ENCODE measurements at regions of chr15 and their contacts with region 1.

Region 1: GRCh38 chr15:69760890-69761568 is 308.4 kb downstream of the RPLP1 start:
- DNase-seq: peak; percentile 41
- ATAC-seq: peak; percentile 71
- H3K4me3 Mint-ChIP-seq: peak overlapping the region; percentile 11
- H3K27ac Mint-ChIP-seq: peak overlapping the region; percentile 57
- H3K4me1 Mint-ChIP-seq: peaks cover 74% of the 10 kb centered on the region
- H3K27me3 Mint-ChIP-seq: no peaks in the 10 kb centered on the region
- CTCF ChIP-seq: no peak

Region 2: DNA sequence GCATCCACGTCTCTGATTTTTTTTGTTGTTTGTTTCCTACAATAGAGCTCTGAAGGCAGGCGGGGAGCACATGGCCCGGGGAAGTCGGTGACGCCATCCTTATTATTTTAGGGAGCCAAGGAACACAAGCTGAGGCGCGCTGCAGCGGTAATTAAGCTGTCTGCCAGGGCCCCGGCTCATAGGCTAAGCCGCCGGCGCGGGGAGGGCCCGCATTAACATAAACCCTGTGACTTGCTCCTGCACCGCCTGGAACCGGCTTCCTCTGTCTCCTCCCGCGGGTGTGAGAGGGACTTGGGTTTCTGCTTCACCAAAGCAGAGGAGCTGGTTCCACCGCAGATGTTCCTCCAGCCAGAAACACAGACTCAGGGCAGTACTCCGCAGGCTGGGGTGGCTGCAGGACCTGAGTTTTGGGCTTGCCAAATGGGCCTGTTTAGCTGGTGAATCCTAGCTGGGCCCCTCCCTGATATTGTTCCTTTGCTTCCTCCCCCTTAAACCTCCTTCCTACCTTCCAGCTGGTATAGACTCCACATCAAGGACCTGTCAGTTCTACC is 965.7 kb before region 1 on chr15:
- CTCF ChIA-PET with region 1: no interaction called
- POLR2A ChIA-PET with region 1: no interaction called
- intact Hi-C with region 1: loop called (anchors 5 kb)
- DNase-seq: peak; percentile 55
- ATAC-seq: peak; percentile 62
- H3K4me3 Mint-ChIP-seq: peak overlapping the region; percentile 75
- H3K27ac Mint-ChIP-seq: peak overlapping the region; percentile 85
- H3K4me1 Mint-ChIP-seq: peaks cover 97% of the 10 kb centered on the region
- H3K27me3 Mint-ChIP-seq: no peaks in the 10 kb centered on the region
- CTCF ChIP-seq: no peak

Region 3: GRCh38 chr15:68924866-68925560 is 836.0 kb before region 1 on chr15:
- CTCF ChIA-PET with region 1: no interaction called
- POLR2A ChIA-PET with region 1: no interaction called
- intact Hi-C with region 1: no loop called
- DNase-seq: peak; percentile 32
- ATAC-seq: peak; percentile 69
- H3K4me3 Mint-ChIP-seq: no peak overlapping the region
- H3K27ac Mint-ChIP-seq: no peak overlapping the region
- H3K4me1 Mint-ChIP-seq: peaks cover 2% of the 10 kb centered on the region
- H3K27me3 Mint-ChIP-seq: peaks cover 8% of the 10 kb centered on the region
- CTCF ChIP-seq: no peak

Region 4: GRCh38 chr15:69919816-69920215 is 158.8 kb after region 1 on chr15:
- CTCF ChIA-PET with region 1: no interaction called
- POLR2A ChIA-PET with region 1: no interaction called
- intact Hi-C with region 1: loop called (anchors 5 kb)
- DNase-seq: no peak
- ATAC-seq: no peak
- H3K4me3 Mint-ChIP-seq: no peak overlapping the region
- H3K27ac Mint-ChIP-seq: peak overlapping the region; percentile 24
- H3K4me1 Mint-ChIP-seq: peaks cover 45% of the 10 kb centered on the region
- H3K27me3 Mint-ChIP-seq: no peaks in the 10 kb centered on the region
- CTCF ChIP-seq: no peak

Region 5: GRCh38 chr15:70140025-70140542 is 379.1 kb after region 1 on chr15:
- CTCF ChIA-PET with region 1: no interaction called
- POLR2A ChIA-PET with region 1: interaction called, 11 read pairs
- intact Hi-C with region 1: no loop called
- DNase-seq: no peak
- ATAC-seq: no peak
- H3K4me3 Mint-ChIP-seq: no peak overlapping the region
- H3K27ac Mint-ChIP-seq: no peak overlapping the region
- H3K4me1 Mint-ChIP-seq: peaks cover 33% of the 10 kb centered on the region
- H3K27me3 Mint-ChIP-seq: peaks cover 8% of the 10 kb centered on the region
- CTCF ChIP-seq: no peak

Measured in activated B cell treated with CpG ODN at 0.5 μM for 24 hours (primary cell).